Activated naive CD4-positive, alpha-beta T cell treated with anti-CD3 and anti-CD28 coated beads for 36 hours (primary cell): ENCODE measurements at regions of chr7 and their contacts with region 1.

Region 1: DNA sequence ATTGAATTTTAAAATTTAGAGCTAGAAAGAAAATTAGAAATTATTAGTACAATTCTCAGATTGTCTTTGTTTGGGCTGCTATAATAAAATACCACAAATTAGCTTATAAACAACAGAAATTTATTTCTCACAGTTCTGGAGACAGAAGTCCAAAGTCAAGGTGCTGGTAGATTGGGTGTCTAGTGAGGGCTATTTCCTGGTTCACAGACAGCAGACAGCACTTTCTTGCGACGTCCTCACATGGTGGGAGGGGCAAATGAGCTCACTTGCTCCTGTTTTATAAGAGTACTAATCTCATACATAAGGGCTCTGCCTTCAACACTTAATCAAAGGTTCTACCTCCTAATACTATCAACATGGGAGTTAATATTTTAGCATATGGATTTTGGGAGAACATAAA is 134.1 kb downstream of the MDFIC start:
- DNase-seq: no peak
- H3K4me3 Mint-ChIP-seq: no peak overlapping the region
- H3K27ac Mint-ChIP-seq: no peak overlapping the region
- H3K4me1 Mint-ChIP-seq: no peaks in the 10 kb centered on the region
- H3K27me3 Mint-ChIP-seq: no peaks in the 10 kb centered on the region

Region 2: DNA sequence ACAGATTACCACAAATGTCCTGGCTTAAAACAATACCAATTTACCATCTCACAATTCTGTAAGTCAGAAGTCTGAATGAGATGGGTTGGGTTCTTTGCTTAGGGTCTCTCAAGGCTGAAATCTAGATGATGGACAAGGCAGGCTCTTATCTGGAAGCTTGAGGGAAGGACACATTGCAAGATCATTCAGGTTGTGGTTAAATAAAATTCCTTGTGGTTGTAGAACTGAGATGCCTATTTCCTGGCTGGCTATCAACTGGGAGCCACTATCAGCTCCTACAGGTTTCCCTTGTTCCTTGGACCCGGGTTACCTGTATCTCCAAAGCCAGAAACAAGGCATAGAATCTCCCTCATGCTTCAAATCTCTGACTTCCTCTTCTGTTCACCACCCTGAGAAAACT is 14.3 kb after region 1 on chr7:
- CTCF ChIA-PET with region 1: no interaction called
- intact Hi-C with region 1: loop called (anchors 2 kb)
- DNase-seq: no peak
- H3K4me3 Mint-ChIP-seq: no peak overlapping the region
- H3K27ac Mint-ChIP-seq: no peak overlapping the region
- H3K4me1 Mint-ChIP-seq: peaks cover 8% of the 10 kb centered on the region
- H3K27me3 Mint-ChIP-seq: no peaks in the 10 kb centered on the region

Region 3: DNA sequence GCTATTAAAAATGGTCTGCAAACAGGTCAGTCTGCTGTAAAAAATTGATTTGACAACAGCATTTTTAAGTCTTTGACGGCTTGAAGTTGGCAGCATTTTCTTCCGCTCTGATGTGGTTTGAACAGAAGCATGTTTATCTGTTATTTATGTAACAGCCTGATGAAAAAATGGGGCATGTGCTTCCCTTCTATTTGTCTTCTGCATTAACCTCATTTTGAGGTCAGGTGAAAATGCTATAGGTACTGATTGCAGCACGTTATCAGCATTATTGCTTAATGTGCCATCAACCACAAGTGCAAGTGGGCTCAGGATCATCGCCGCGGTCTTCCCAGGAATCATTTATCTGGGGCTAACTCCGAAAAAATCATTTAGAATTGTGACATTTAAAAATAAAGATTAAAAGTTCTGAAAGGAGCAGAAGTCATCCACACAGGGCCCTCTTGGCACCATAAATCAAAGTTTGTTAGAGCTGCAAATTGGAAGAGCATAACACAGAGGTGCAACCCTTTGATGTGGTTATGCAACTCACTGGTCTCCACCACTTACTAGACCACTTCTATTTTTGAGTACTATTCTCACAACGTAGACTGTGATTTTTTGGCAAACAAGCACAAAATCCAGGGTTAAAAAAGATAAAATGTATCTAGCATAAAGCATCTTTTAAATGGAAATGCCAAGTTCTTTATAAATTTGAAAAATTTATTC is 173.5 kb after region 1 on chr7:
- CTCF ChIA-PET with region 1: no interaction called
- intact Hi-C with region 1: no loop called
- DNase-seq: no peak
- H3K4me3 Mint-ChIP-seq: no peak overlapping the region
- H3K27ac Mint-ChIP-seq: no peak overlapping the region
- H3K4me1 Mint-ChIP-seq: peaks cover 18% of the 10 kb centered on the region
- H3K27me3 Mint-ChIP-seq: peaks cover 8% of the 10 kb centered on the region